H1 (cell line): ENCODE measurements at regions of chr9 and their contacts with region 1.

Region 1: DNA sequence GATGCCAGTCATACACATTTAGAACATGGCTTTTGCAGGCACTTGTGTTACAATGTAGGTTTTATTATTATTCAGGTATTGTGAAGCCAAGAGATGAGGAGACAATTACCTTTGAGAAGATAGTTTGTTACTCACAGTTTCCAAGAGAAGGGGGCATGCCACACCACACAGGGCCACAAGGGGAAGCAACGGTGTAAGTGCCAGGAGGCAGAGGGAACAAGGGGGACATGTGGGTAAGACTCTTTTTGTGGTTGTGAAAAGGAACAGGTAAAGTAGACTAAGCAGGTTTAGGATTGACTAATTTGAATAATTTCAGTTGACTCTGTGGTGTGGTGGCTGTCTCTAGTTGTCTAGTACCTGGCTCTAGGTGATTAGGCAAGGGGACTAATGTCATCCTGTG is 191.2 kb downstream of the TRPM6 start:
- DNase-seq: no peak
- H3K4me3 ChIP-seq: no peak overlapping the region
- H3K27ac ChIP-seq: no peak overlapping the region
- H3K4me1 ChIP-seq: no peaks in the 10 kb centered on the region
- H3K27me3 ChIP-seq: no peaks in the 10 kb centered on the region
- CTCF ChIP-seq: peak; percentile 17 to 69 (median 57); a peak in 3 of 4 replicates
- EP300 ChIP-seq: no peak
- POLR2A ChIP-seq: no peak
- RAD21 ChIP-seq: peak; percentile 43 to 45

Region 2: DNA sequence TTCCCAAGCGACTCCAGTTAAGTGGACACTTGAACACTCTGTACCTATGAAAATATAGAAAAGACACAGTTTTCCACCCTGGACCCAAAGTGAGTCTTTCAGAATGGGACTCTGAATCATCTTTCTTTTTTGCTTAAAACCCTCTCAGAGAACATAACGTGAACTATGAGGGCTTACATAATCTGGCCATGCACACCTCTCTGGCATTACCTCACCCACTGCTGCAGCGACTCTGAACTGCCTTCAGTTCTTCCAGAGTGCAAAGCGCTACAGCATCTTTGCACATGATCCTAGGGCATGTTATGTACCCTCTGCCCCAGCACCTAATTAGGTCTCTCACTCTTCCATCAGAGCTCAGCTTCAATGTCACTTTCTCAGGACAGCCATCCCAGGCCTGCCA is 13.2 kb before region 1 on chr9:
- CTCF ChIA-PET with region 1: interaction called, 10 read pairs
- POLR2A ChIA-PET with region 1: no interaction called
- DNase-seq: no peak
- H3K4me3 ChIP-seq: no peak overlapping the region
- H3K27ac ChIP-seq: no peak overlapping the region
- H3K4me1 ChIP-seq: no peaks in the 10 kb centered on the region
- H3K27me3 ChIP-seq: no peaks in the 10 kb centered on the region
- CTCF ChIP-seq: no peak
- EP300 ChIP-seq: no peak
- POLR2A ChIP-seq: no peak
- RAD21 ChIP-seq: no peak

Region 3: GRCh38 chr9:74724317-74724716 is 27.8 kb after region 1 on chr9:
- CTCF ChIA-PET with region 1: no interaction called
- POLR2A ChIA-PET with region 1: no interaction called
- DNase-seq: no peak
- H3K4me3 ChIP-seq: no peak overlapping the region
- H3K27ac ChIP-seq: no peak overlapping the region
- H3K4me1 ChIP-seq: peaks cover 0 to 2% (median 0%) of the 10 kb centered on the region in 4 experiments; a peak in 3 of 7 replicates
- H3K27me3 ChIP-seq: no peaks in the 10 kb centered on the region
- CTCF ChIP-seq: no peak
- EP300 ChIP-seq: no peak
- POLR2A ChIP-seq: no peak
- RAD21 ChIP-seq: no peak

Region 4: GRCh38 chr9:74777136-74777879 is 80.8 kb after region 1 on chr9:
- CTCF ChIA-PET with region 1: no interaction called
- POLR2A ChIA-PET with region 1: no interaction called
- DNase-seq: peak in 1 of 2 experiments; percentile 80
- H3K4me3 ChIP-seq: no peak overlapping the region
- H3K27ac ChIP-seq: no peak overlapping the region
- H3K4me1 ChIP-seq: no peaks in the 10 kb centered on the region
- H3K27me3 ChIP-seq: no peaks in the 10 kb centered on the region
- CTCF ChIP-seq: peak; percentile 9 to 70 (median 69)
- EP300 ChIP-seq: no peak
- POLR2A ChIP-seq: no peak
- RAD21 ChIP-seq: peak; percentile 70 to 83